ENCODE measurements at regions of chr17 and their contacts with region 1.

Region 1: DNA sequence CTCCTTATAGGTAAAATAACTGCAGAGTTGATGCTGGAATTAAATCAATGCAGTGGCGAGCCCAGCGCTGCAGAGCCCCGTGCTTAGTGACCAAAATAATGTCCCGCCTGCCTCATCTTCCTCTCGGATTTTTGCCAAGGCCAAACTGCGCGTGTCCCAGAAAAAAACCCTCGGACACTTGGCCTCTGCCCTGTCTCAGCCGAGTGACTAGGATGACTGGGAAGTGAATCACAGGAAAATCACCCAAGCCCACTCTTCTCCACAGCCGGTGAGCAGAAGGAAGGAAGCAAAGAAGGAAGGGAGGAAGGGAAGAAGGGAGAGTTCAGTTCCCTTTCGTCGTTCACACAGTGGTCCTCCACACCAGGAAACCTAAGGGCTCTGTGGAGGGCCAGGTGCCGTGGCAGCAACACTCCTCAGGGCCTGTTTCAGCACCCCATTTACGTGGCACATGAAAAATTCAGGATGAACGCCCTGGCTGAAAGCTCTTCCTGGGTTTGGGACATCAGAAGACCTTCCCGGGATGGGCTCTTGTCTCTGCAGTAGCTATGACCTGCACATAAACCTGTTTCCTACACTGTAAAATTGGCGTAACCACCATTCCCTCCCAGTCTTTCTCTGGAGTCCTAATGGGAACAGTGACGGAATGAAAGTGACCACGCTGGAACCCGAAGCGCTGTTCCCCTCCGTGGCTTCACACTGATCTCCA is 25.4 kb upstream of the HOXB13 start:
- DNase-seq: no peak
- H3K4me3 Mint-ChIP-seq: no peak overlapping the region
- H3K27ac Mint-ChIP-seq: no peak overlapping the region
- H3K4me1 Mint-ChIP-seq: no peaks in the 10 kb centered on the region
- H3K27me3 Mint-ChIP-seq: peaks cover 83% of the 10 kb centered on the region

Region 2: DNA sequence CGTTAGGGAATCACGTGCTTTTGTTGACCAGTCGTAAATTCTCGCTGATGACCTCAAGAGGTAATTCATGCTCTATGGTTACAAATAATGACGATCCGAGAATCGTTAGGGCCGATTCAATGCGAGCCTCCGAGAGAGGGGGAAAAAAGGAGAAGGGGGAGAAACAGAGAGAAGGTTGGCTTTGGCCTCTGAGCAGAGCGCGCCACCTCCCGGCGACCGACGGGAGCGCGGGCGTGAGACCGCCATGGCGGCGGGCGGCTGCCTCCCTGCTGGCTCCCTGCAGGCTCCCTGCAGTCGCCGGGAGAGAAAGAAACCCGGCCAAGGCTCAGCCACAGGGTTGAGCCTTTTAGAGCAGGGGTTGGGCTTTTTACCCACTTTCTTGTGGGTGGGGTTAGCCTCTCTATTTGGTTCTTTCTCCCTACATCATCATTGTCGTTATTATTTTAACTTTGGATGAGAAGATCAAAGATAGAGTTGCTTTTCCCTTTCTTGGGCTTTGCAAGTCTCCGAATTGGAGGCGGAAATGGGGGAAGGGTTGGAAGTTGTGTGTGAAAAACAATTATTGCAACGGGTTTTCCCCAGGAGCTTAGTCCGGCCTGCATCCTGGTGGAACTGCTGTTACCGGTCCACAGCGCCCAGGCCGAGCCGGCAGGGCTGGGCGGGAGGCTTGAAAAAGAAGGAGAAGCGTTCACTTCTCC is 160.0 kb before region 1 on chr17:
- intact Hi-C with region 1: no loop called
- DNase-seq: peak; percentile 78
- H3K4me3 Mint-ChIP-seq: peak overlapping the region; percentile 76
- H3K27ac Mint-ChIP-seq: no peak overlapping the region
- H3K4me1 Mint-ChIP-seq: peaks cover 43% of the 10 kb centered on the region
- H3K27me3 Mint-ChIP-seq: peaks cover 86% of the 10 kb centered on the region

Region 3: GRCh38 chr17:48681609-48682008 is 72.3 kb before region 1 on chr17:
- intact Hi-C with region 1: no loop called
- DNase-seq: no peak
- H3K4me3 Mint-ChIP-seq: no peak overlapping the region
- H3K27ac Mint-ChIP-seq: no peak overlapping the region
- H3K4me1 Mint-ChIP-seq: peaks cover 5% of the 10 kb centered on the region
- H3K27me3 Mint-ChIP-seq: peaks cover 38% of the 10 kb centered on the region

Region 4: GRCh38 chr17:48724251-48725003 is 29.5 kb before region 1 on chr17:
- intact Hi-C with region 1: loop called (anchors 1 kb)
- DNase-seq: peak; percentile 68
- H3K4me3 Mint-ChIP-seq: no peak overlapping the region
- H3K27ac Mint-ChIP-seq: no peak overlapping the region
- H3K4me1 Mint-ChIP-seq: peaks cover 12% of the 10 kb centered on the region
- H3K27me3 Mint-ChIP-seq: peaks cover 89% of the 10 kb centered on the region

Region 5: GRCh38 chr17:48738803-48739526 is 15.0 kb before region 1 on chr17:
- intact Hi-C with region 1: no loop called
- DNase-seq: no peak
- H3K4me3 Mint-ChIP-seq: no peak overlapping the region
- H3K27ac Mint-ChIP-seq: no peak overlapping the region
- H3K4me1 Mint-ChIP-seq: peaks cover 4% of the 10 kb centered on the region
- H3K27me3 Mint-ChIP-seq: peaks cover 93% of the 10 kb centered on the region

Region 6: DNA sequence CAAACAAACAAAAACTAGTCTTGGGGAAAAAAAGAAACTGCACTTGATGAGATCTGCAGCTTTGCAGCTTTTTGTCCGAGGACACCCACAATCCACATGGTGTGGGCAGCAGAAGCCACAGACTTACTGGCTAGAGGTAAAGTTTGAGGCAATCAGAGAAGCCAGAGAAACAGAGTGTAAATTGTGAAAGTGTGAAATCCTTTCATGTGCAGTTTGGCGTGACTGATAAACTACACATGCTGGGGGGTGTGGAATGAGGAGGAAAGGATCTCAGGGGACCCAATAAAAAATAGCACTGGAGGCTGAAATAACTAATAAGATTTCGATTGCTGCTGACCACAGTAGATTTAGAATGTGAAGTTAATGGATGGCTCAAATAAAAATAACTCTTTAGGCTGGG is 17.0 kb after region 1 on chr17:
- intact Hi-C with region 1: no loop called
- DNase-seq: no peak
- H3K4me3 Mint-ChIP-seq: no peak overlapping the region
- H3K27ac Mint-ChIP-seq: no peak overlapping the region
- H3K4me1 Mint-ChIP-seq: peaks cover 3% of the 10 kb centered on the region
- H3K27me3 Mint-ChIP-seq: peaks cover 32% of the 10 kb centered on the region